ENCODE measurements at regions of chr20 and their contacts with region 1.

Region 1: GRCh38 chr20:63627129-63627750 is 339 bp upstream of the GMEB2 start:
- DNase-seq: peak; percentile 90 to 97 (median 94)
- ATAC-seq: peak; percentile 77
- H3K4me3 ChIP-seq: peak overlapping the region; percentile 91 to 100
- H3K4me3 Mint-ChIP-seq: peak overlapping the region; percentile 97
- H3K27ac ChIP-seq: peak overlapping the region; percentile 81 to 91
- H3K27ac Mint-ChIP-seq: peak overlapping the region; percentile 93
- H3K4me1 ChIP-seq: peaks cover 39% of the 10 kb centered on the region
- H3K4me1 Mint-ChIP-seq: peaks cover 43% of the 10 kb centered on the region
- H3K27me3 ChIP-seq: no peaks in the 10 kb centered on the region
- H3K27me3 Mint-ChIP-seq: no peaks in the 10 kb centered on the region
- CTCF ChIP-seq: no peak

Region 2: GRCh38 chr20:63498960-63499337 is 128.3 kb before region 1 on chr20 and contains the start of gene EEF1A2:
- CTCF ChIA-PET with region 1: no interaction called
- POLR2A ChIA-PET with region 1: no interaction called
- intact Hi-C with region 1: no loop called
- DNase-seq: peak in 8 of 9 experiments; percentile 26 to 79 (median 56)
- ATAC-seq: peak; percentile 78
- H3K4me3 ChIP-seq: peak within 1 kb of the TSS in 1 of 2 experiments; percentile 20
- H3K4me3 Mint-ChIP-seq: peak within 1 kb of the TSS; percentile 26
- H3K27ac ChIP-seq: no peak within 1 kb of the TSS
- H3K27ac Mint-ChIP-seq: no peak within 1 kb of the TSS
- H3K4me1 ChIP-seq: peaks cover 16% of the 10 kb centered on the region
- H3K4me1 Mint-ChIP-seq: peaks cover 5% of the 10 kb centered on the region
- H3K27me3 ChIP-seq: peaks cover 9 to 33% of the 10 kb centered on the region in 2 experiments
- H3K27me3 Mint-ChIP-seq: peaks cover 13% of the 10 kb centered on the region
- CTCF ChIP-seq: peak; percentile 26
- total RNA-seq, gene EEF1A2: 0.42 to 0.81 TPM

Region 3: GRCh38 chr20:63602321-63602720 is 24.9 kb before region 1 on chr20:
- CTCF ChIA-PET with region 1: no interaction called
- POLR2A ChIA-PET with region 1: no interaction called
- intact Hi-C with region 1: no loop called
- DNase-seq: no peak
- ATAC-seq: no peak
- H3K4me3 ChIP-seq: no peak overlapping the region
- H3K4me3 Mint-ChIP-seq: no peak overlapping the region
- H3K27ac ChIP-seq: peak overlapping the region in 1 of 2 experiments; percentile 48
- H3K27ac Mint-ChIP-seq: peak overlapping the region; percentile 62
- H3K4me1 ChIP-seq: no peaks in the 10 kb centered on the region
- H3K4me1 Mint-ChIP-seq: no peaks in the 10 kb centered on the region
- H3K27me3 ChIP-seq: no peaks in the 10 kb centered on the region
- H3K27me3 Mint-ChIP-seq: no peaks in the 10 kb centered on the region
- CTCF ChIP-seq: no peak

Region 4: DNA sequence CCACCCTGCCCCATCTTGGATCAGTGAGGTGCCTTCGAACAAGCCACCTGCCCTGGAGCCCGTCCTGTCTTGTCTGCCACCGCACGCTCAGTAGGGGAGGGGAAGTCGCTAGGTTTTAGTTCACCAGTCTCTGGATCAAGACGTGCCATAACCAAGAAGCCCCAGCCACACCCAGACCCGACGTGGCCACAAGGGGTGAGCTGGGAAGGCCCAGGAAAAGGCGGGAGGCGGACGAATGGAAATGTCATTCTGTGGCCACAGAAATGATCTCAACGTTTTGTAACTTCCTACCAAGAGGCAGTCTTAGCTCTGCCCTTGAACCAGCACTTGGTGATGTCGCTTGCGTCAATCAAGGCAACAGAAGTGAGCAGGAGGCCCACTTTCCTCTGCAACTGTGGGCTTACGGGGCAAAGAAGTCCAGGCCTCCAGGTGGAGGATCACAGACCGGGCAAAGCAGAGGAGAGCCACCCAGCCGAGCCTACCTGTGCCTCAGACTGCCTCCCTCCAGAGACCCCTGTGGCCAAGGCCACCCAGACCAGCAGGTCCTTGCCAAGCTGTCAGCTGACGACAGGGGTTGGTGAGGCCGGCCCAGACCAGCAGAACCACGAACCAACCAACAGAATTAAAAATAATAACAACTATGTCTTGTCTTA is 14.8 kb before region 1 on chr20:
- CTCF ChIA-PET with region 1: interaction called, 5 read pairs
- POLR2A ChIA-PET with region 1: interaction called, 11 read pairs
- intact Hi-C with region 1: no loop called
- DNase-seq: no peak
- ATAC-seq: no peak
- H3K4me3 ChIP-seq: no peak overlapping the region
- H3K4me3 Mint-ChIP-seq: no peak overlapping the region
- H3K27ac ChIP-seq: no peak overlapping the region
- H3K27ac Mint-ChIP-seq: no peak overlapping the region
- H3K4me1 ChIP-seq: no peaks in the 10 kb centered on the region
- H3K4me1 Mint-ChIP-seq: peaks cover 9% of the 10 kb centered on the region
- H3K27me3 ChIP-seq: no peaks in the 10 kb centered on the region
- H3K27me3 Mint-ChIP-seq: no peaks in the 10 kb centered on the region
- CTCF ChIP-seq: no peak

Region 5: GRCh38 chr20:63664861-63665716 is 37.8 kb after region 1 on chr20:
- CTCF ChIA-PET with region 1: no interaction called
- POLR2A ChIA-PET with region 1: no interaction called
- intact Hi-C with region 1: no loop called
- DNase-seq: no peak
- ATAC-seq: no peak
- H3K4me3 ChIP-seq: no peak overlapping the region
- H3K4me3 Mint-ChIP-seq: no peak overlapping the region
- H3K27ac ChIP-seq: no peak overlapping the region
- H3K27ac Mint-ChIP-seq: no peak overlapping the region
- H3K4me1 ChIP-seq: no peaks in the 10 kb centered on the region
- H3K4me1 Mint-ChIP-seq: peaks cover 2% of the 10 kb centered on the region
- H3K27me3 ChIP-seq: no peaks in the 10 kb centered on the region
- H3K27me3 Mint-ChIP-seq: no peaks in the 10 kb centered on the region
- CTCF ChIP-seq: no peak

Region 6: GRCh38 chr20:63858393-63859165 is 231.3 kb after region 1 on chr20:
- CTCF ChIA-PET with region 1: no interaction called
- POLR2A ChIA-PET with region 1: no interaction called
- intact Hi-C with region 1: no loop called
- DNase-seq: peak in 1 of 9 experiments; percentile 26
- ATAC-seq: peak; percentile 24
- H3K4me3 ChIP-seq: peak overlapping the region; percentile 13 to 46
- H3K4me3 Mint-ChIP-seq: peak overlapping the region; percentile 61
- H3K27ac ChIP-seq: peak overlapping the region; percentile 18 to 21
- H3K27ac Mint-ChIP-seq: peak overlapping the region; percentile 85
- H3K4me1 ChIP-seq: peaks cover 40% of the 10 kb centered on the region
- H3K4me1 Mint-ChIP-seq: peaks cover 34% of the 10 kb centered on the region
- H3K27me3 ChIP-seq: peaks cover 0 to 2% of the 10 kb centered on the region in 2 experiments
- H3K27me3 Mint-ChIP-seq: no peaks in the 10 kb centered on the region
- CTCF ChIP-seq: no peak